B cell (primary cell): ENCODE measurements at regions of chr10 and their contacts with region 1.

Region 1: GRCh38 chr10:70549962-70550458 is 52.5 kb downstream of the PRF1 start:
- DNase-seq: peak; percentile 76
- ATAC-seq: peak; percentile 70
- H3K4me3 ChIP-seq: no peak overlapping the region
- H3K4me3 Mint-ChIP-seq: no peak overlapping the region
- H3K27ac ChIP-seq: no peak overlapping the region
- H3K27ac Mint-ChIP-seq: no peak overlapping the region
- H3K4me1 ChIP-seq: no peaks in the 10 kb centered on the region
- H3K4me1 Mint-ChIP-seq: no peaks in the 10 kb centered on the region
- H3K27me3 ChIP-seq: no peaks in the 10 kb centered on the region
- H3K27me3 Mint-ChIP-seq: no peaks in the 10 kb centered on the region
- CTCF ChIP-seq: peak; percentile 95

Region 2: GRCh38 chr10:70418229-70418628 is 131.8 kb before region 1 on chr10:
- CTCF ChIA-PET with region 1: no interaction called
- POLR2A ChIA-PET with region 1: no interaction called
- intact Hi-C with region 1: no loop called
- DNase-seq: no peak
- ATAC-seq: no peak
- H3K4me3 ChIP-seq: no peak overlapping the region
- H3K4me3 Mint-ChIP-seq: no peak overlapping the region
- H3K27ac ChIP-seq: no peak overlapping the region
- H3K27ac Mint-ChIP-seq: no peak overlapping the region
- H3K4me1 ChIP-seq: no peaks in the 10 kb centered on the region
- H3K4me1 Mint-ChIP-seq: peaks cover 17% of the 10 kb centered on the region
- H3K27me3 ChIP-seq: no peaks in the 10 kb centered on the region
- H3K27me3 Mint-ChIP-seq: no peaks in the 10 kb centered on the region
- CTCF ChIP-seq: no peak

Region 3: DNA sequence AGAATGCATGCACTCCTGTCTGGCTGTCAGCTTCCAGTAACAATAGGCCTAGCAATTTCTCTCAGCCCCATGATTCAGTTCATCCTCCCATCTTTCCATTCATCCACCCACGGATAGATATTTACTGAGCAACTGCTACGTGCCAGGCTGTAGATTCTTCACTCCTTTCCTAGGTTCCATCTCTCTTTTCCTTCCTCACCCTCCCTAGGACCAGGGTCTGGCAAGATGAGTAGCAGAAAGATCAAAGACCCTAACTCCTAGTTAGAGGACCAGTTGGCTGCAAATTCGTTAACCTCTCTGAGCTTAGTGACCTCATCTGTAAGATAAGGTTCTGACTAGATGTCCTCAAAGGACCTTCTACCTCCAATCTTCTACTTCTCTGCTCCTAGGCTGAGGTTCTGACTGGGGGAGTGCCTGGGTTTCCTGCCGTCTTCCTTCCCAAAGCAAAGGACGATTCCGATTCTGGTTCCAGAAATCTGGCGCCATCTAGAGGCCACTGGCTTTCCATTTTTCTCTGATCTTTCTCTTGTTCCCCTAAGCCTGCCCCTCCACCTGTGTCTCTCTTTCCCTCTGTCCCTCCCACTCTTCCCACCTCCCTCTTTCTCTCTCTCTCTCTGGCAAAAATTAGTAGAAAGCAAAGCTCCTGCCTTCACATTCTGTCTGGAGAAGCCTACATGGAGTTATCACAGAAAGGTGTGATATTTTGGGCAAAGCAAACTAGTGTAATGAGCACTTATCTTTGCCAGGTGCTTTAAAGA is 208.9 kb after region 1 on chr10:
- CTCF ChIA-PET with region 1: interaction called, 26 read pairs
- POLR2A ChIA-PET with region 1: no interaction called
- intact Hi-C with region 1: no loop called
- DNase-seq: peak; percentile 65
- ATAC-seq: peak; percentile 33
- H3K4me3 ChIP-seq: no peak overlapping the region
- H3K4me3 Mint-ChIP-seq: no peak overlapping the region
- H3K27ac ChIP-seq: no peak overlapping the region
- H3K27ac Mint-ChIP-seq: no peak overlapping the region
- H3K4me1 ChIP-seq: no peaks in the 10 kb centered on the region
- H3K4me1 Mint-ChIP-seq: no peaks in the 10 kb centered on the region
- H3K27me3 ChIP-seq: no peaks in the 10 kb centered on the region
- H3K27me3 Mint-ChIP-seq: peaks cover 4% of the 10 kb centered on the region
- CTCF ChIP-seq: peak; percentile 92

Region 4: DNA sequence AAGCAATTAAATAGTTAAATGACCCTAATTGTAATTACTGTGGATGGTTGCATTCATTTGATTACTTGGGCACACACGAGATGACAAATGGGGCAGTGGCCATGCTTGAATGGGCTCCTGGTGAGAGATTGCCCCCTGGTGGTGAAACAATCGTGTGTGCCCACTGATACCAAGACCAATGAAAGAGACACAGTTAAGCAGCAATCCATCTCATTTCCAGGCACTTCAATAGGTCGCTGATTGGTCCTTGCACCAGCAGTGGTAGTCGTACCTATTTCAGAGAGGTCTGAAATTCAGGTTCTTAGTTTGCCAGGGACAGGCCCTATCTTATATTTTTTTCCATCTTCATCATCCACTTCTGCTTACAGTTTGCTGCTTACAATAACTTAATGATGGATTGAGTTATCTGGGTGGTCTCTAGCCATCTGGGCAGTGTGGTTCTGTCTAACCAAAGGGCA is 330.1 kb after region 1 on chr10:
- CTCF ChIA-PET with region 1: interaction called, 18 read pairs
- POLR2A ChIA-PET with region 1: no interaction called
- intact Hi-C with region 1: no loop called
- DNase-seq: peak; percentile 82
- ATAC-seq: peak; percentile 92
- H3K4me3 ChIP-seq: no peak overlapping the region
- H3K4me3 Mint-ChIP-seq: no peak overlapping the region
- H3K27ac ChIP-seq: no peak overlapping the region
- H3K27ac Mint-ChIP-seq: no peak overlapping the region
- H3K4me1 ChIP-seq: no peaks in the 10 kb centered on the region
- H3K4me1 Mint-ChIP-seq: peaks cover 6% of the 10 kb centered on the region
- H3K27me3 ChIP-seq: no peaks in the 10 kb centered on the region
- H3K27me3 Mint-ChIP-seq: no peaks in the 10 kb centered on the region
- CTCF ChIP-seq: peak; percentile 88